SK-N-SH (cell line): ENCODE measurements at regions of chr3 and their contacts with region 1.

Region 1: GRCh38 chr3:74267588-74268184 is 346.8 kb downstream of the CNTN3 start:
- DNase-seq: peak; percentile 48
- H3K4me3 ChIP-seq: no peak overlapping the region
- H3K27ac ChIP-seq: no peak overlapping the region
- H3K4me1 ChIP-seq: 0 out of 4 replicates have a peak, but pooled peaks cover 0 to 3% of the 10 kb centered on the region in 2 experiments
- H3K27me3 ChIP-seq: no peaks in the 10 kb centered on the region
- CTCF ChIP-seq: peak; percentile 90
- EP300 ChIP-seq: no peak
- RAD21 ChIP-seq: peak; percentile 91

Region 2: DNA sequence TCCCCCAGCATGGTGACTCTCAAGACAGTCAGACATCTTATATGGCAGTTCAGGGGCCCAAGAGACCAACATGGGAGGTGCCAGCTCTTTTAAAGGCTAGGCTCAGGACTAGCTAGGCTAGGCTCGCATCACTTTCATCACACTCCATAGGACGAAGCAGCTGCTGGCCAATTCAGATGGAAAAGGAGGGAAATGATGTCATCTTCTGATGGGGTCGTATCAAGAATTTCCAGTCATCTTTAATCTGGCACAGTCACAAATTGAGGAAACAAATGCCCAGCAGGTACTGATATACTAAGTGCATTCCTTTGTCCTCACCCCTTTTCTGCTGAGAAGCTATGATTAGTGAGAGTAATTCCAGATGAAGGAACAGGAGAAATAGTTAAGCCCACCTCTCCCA is 14.1 kb before region 1 on chr3:
- CTCF ChIA-PET with region 1: interaction called, 14 read pairs
- POLR2A ChIA-PET with region 1: no interaction called
- DNase-seq: no peak
- H3K4me3 ChIP-seq: no peak overlapping the region
- H3K27ac ChIP-seq: no peak overlapping the region
- H3K4me1 ChIP-seq: no peaks in the 10 kb centered on the region
- H3K27me3 ChIP-seq: no peaks in the 10 kb centered on the region
- CTCF ChIP-seq: no peak
- EP300 ChIP-seq: no peak
- RAD21 ChIP-seq: no peak

Region 3: DNA sequence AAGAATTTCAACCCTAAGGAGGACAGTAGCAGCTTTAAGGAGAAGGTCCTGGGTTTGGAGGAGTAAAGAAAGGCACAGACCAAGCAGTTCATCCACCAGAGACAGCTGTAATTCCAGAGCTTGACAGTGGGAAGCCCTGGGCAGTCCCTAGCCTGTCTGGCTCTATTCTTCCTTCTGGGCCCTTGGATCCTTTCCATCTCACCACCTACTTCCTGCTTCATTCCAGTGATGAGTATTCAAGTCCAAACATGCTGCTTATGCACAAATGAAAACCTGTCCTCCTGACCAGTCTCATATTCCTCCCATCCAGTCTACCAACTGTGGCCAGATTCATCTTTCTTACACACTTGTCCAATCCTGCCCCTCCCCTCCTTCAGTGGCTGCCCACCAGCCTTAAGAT is 175.4 kb after region 1 on chr3:
- CTCF ChIA-PET with region 1: no interaction called
- POLR2A ChIA-PET with region 1: no interaction called
- DNase-seq: no peak
- H3K4me3 ChIP-seq: no peak overlapping the region
- H3K27ac ChIP-seq: 0 out of 4 replicates have a peak overlapping the region, but pooled peaks of 1 of the 2 experiments have one; percentile 3
- H3K4me1 ChIP-seq: no peaks in the 10 kb centered on the region; a peak in 1 of 4 replicates
- H3K27me3 ChIP-seq: no peaks in the 10 kb centered on the region
- CTCF ChIP-seq: no peak
- EP300 ChIP-seq: no peak
- RAD21 ChIP-seq: no peak

Region 4: GRCh38 chr3:74630602-74631001 is 362.9 kb after region 1 on chr3:
- CTCF ChIA-PET with region 1: interaction called, 13 read pairs
- POLR2A ChIA-PET with region 1: no interaction called
- DNase-seq: no peak
- H3K4me3 ChIP-seq: no peak overlapping the region
- H3K27ac ChIP-seq: no peak overlapping the region
- H3K4me1 ChIP-seq: no peaks in the 10 kb centered on the region; a peak in 1 of 4 replicates
- H3K27me3 ChIP-seq: no peaks in the 10 kb centered on the region
- CTCF ChIP-seq: peak; percentile 68
- EP300 ChIP-seq: no peak
- RAD21 ChIP-seq: peak; percentile 71

Region 5: GRCh38 chr3:75001330-75001729 is 733.6 kb after region 1 on chr3:
- CTCF ChIA-PET with region 1: interaction called, 26 read pairs
- POLR2A ChIA-PET with region 1: no interaction called
- DNase-seq: peak; percentile 47
- H3K4me3 ChIP-seq: no peak overlapping the region; a peak in 1 of 4 replicates
- H3K27ac ChIP-seq: no peak overlapping the region
- H3K4me1 ChIP-seq: no peaks in the 10 kb centered on the region
- H3K27me3 ChIP-seq: no peaks in the 10 kb centered on the region
- CTCF ChIP-seq: peak; percentile 66
- EP300 ChIP-seq: no peak
- RAD21 ChIP-seq: peak; percentile 79